MCF 10A (cell line): ENCODE measurements at regions of chr16 and their contacts with region 1.

Region 1: GRCh38 chr16:75234856-75235696 is 16.3 kb downstream of the CTRB1 start:
- DNase-seq: no peak
- H3K4me3 Mint-ChIP-seq: no peak overlapping the region
- H3K27ac Mint-ChIP-seq: no peak overlapping the region
- H3K4me1 Mint-ChIP-seq: peaks cover 11% of the 10 kb centered on the region
- H3K27me3 Mint-ChIP-seq: no peaks in the 10 kb centered on the region
- CTCF ChIP-seq: no peak

Region 2: GRCh38 chr16:75198135-75198600 is 36.9 kb before region 1 on chr16:
- CTCF ChIA-PET with region 1: interaction called, 33 read pairs
- POLR2A ChIA-PET with region 1: interaction called, 3 read pairs
- intact Hi-C with region 1: no loop called
- DNase-seq: no peak
- H3K4me3 Mint-ChIP-seq: no peak overlapping the region
- H3K27ac Mint-ChIP-seq: no peak overlapping the region
- H3K4me1 Mint-ChIP-seq: no peaks in the 10 kb centered on the region
- H3K27me3 Mint-ChIP-seq: peaks cover 23% of the 10 kb centered on the region
- CTCF ChIP-seq: no peak

Region 3: DNA sequence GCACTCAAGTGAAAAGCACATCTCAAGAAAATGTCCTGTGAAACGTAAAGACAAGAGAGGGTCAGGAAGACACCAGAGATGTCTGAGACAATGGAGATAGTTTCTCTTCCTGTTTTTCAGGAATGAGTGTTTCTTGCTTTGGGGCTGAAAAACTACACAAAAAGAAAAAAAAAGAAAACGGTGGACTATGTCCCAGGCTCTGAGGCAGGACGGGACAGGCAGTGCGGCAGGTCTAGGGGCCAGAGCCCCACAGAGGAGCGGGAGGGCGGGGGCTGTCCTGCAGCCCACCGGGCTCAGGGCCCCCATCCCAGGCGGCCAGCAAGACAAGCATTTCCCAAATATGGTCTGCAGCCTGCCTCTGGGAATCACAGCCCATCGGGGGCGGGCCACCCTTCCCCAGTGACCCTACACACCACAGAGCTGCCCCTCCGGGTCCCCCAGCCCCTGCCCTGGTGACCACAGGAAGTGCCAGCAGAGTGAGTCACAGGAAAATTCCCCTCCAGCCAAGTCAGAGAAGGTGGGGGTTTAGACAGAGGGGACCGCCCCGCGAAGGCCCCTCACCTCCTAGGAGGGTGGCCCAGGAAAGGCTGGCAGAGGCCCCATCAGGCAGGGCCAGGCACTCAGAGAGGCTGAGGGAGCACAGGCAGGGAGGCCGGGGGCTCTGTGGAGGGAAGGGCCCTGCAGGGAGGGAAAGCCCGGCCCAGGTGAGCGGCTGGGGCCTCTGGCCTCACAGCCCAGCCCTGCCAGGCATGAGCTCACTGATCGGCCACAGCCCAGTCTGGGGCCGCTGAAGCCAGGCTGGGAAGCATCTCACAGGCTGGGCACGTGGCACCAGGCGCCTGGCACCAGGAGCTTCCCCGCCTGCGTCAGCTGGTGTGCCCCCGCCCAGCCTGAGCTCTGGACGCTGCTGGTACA is 10.0 kb after region 1 on chr16:
- CTCF ChIA-PET with region 1: interaction called, 26 read pairs
- POLR2A ChIA-PET with region 1: interaction called, 11 read pairs
- intact Hi-C with region 1: no loop called
- DNase-seq: peak; percentile 87
- H3K4me3 Mint-ChIP-seq: peak overlapping the region; percentile 45
- H3K27ac Mint-ChIP-seq: peak overlapping the region; percentile 96
- H3K4me1 Mint-ChIP-seq: peaks cover 37% of the 10 kb centered on the region
- H3K27me3 Mint-ChIP-seq: no peaks in the 10 kb centered on the region
- CTCF ChIP-seq: no peak

Region 4: GRCh38 chr16:75265845-75266701 is 31.0 kb after region 1 on chr16:
- CTCF ChIA-PET with region 1: interaction called, 10 read pairs
- POLR2A ChIA-PET with region 1: no interaction called
- intact Hi-C with region 1: no loop called
- DNase-seq: peak; percentile 65
- H3K4me3 Mint-ChIP-seq: peak overlapping the region; percentile 79
- H3K27ac Mint-ChIP-seq: peak overlapping the region; percentile 73
- H3K4me1 Mint-ChIP-seq: peaks cover 17% of the 10 kb centered on the region
- H3K27me3 Mint-ChIP-seq: no peaks in the 10 kb centered on the region
- CTCF ChIP-seq: no peak

Region 5: DNA sequence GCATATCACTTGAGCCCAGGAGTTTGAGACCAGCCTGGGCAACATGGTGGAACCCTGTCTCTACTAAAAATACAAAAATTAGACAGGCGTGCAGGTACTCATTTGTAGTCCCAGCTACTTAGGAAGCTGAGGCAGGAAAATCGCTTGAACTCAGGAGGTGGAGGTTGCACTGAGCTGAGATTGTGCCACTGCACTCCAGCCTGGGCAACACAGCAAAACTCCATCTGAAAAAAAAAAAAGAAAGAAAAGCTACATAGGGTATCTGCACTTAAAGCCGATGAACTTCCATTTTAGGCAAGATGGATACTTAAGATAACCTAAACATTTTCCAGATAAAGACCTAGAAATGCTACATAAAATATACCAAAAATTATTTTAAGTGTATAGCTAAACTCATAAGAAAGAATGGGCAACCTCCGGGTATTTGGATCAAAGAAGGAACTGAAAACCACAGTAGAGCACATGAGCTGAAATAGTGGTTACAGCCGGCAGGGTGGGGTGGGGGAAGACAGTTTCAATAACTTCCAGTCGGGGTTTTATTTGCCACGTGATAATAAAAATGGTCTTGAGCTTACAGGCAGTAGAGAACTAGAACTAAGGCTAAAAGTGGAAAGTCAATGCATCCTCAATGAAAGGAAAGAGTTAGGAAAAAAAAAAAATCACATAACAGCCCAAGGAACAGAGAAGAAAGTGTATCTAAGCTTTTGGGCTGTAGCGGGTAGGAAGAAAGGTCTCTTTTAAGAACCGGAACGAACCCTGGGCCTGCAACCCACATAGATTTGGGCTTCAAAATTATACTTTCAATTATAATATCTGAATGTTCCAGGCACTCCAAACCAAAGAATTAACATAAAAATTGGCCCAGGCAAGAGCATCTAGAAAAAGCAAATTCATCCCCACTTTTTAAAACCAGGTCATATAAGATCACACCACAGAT is 145.1 kb after region 1 on chr16:
- CTCF ChIA-PET with region 1: interaction called, 106 read pairs
- POLR2A ChIA-PET with region 1: interaction called, 10 read pairs
- intact Hi-C with region 1: loop called (anchors 1 kb)
- DNase-seq: no peak
- H3K4me3 Mint-ChIP-seq: no peak overlapping the region
- H3K27ac Mint-ChIP-seq: peak overlapping the region; percentile 19
- H3K4me1 Mint-ChIP-seq: peaks cover 38% of the 10 kb centered on the region
- H3K27me3 Mint-ChIP-seq: no peaks in the 10 kb centered on the region
- CTCF ChIP-seq: no peak

Region 6: DNA sequence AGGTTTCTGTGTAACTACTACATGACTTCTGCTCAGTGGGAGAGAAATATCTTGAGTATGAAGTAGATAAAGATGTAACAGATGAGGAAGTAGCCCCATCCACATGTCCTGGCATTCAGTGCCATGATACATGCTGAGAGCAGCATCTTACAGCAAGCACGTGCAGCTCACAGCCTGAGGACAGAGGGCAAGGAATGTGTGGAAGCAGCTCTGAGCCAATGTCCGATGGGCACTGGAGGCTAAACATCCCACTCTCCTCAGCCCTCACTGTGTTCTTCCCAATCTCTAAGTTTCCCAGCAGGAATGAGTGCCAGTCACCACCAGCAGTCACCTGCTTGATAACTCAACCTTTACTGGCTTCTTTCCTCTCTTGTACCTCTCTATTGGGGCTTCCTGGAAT is 157.8 kb after region 1 on chr16:
- CTCF ChIA-PET with region 1: interaction called, 106 read pairs
- POLR2A ChIA-PET with region 1: interaction called, 4 read pairs
- intact Hi-C with region 1: no loop called
- DNase-seq: no peak
- H3K4me3 Mint-ChIP-seq: no peak overlapping the region
- H3K27ac Mint-ChIP-seq: no peak overlapping the region
- H3K4me1 Mint-ChIP-seq: peaks cover 6% of the 10 kb centered on the region
- H3K27me3 Mint-ChIP-seq: no peaks in the 10 kb centered on the region
- CTCF ChIP-seq: no peak

Region 7: DNA sequence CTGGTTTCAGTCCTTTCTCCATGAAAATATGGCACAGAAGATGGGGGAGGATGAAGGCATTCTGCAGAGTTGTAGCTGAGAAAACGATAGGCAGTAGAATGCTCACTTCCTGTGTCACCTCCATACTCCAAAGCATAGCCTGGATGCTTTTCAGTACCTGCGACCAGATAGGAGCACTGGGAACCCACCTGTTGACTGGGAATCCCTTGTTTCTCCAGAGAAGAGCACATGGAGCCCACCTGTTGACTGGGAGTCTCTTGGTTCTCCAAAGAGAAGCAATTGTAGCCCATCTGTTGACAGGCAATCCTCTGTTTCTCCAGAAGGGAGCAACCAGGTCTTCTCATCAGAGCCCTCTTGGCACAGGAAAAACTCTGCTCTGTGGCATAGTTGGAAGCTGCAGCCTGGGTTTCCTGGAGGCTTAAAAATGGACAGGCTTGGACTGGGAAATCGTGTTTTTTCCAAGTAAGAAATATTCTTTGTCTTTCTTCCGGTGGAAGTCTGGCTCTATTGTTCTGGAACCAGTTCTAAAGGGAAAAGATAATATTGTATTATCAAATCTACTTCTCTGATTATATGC is 425.7 kb after region 1 on chr16:
- CTCF ChIA-PET with region 1: no interaction called
- POLR2A ChIA-PET with region 1: no interaction called
- intact Hi-C with region 1: no loop called
- DNase-seq: no peak
- H3K4me3 Mint-ChIP-seq: no peak overlapping the region
- H3K27ac Mint-ChIP-seq: no peak overlapping the region
- H3K4me1 Mint-ChIP-seq: peaks cover 8% of the 10 kb centered on the region
- H3K27me3 Mint-ChIP-seq: no peaks in the 10 kb centered on the region
- CTCF ChIP-seq: no peak